ENCODE measurements at regions of chr9 and their contacts with region 1.

Region 1: DNA sequence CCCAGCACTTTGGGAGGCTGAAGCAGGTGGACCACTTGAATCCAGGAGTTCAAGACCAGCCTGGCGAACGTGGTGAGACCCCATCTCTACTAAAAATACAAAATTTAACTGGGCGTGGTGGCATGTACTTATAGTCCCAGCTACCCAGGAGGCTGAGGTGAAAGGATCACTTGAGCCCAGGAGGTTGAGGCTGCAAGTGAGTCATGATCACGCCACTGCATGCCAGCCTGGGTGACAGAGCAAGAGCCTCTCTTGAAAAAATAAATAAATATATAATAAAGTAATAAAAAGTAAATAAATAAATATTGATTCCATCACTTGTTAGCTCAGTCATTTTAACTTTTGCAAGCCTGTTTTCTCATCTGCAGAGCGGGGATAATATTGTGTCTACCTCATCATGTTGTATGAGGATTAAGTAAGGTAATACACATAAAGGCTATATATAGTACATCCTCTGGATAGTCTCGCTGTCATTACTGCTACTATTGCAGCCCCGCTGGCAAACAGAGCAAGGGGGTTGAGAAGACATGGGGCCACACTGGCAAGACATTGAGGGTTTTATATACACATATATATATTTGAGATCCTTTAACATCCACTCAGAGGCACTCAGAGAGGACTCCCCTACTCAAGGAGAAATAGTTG is 210.9 kb downstream of the C9orf152 start:
- DNase-seq: no peak
- H3K4me3 ChIP-seq: no peak overlapping the region
- H3K4me3 Mint-ChIP-seq: no peak overlapping the region
- H3K27ac ChIP-seq: no peak overlapping the region
- H3K27ac Mint-ChIP-seq: no peak overlapping the region
- H3K4me1 ChIP-seq: no peaks in the 10 kb centered on the region
- H3K4me1 Mint-ChIP-seq: peaks cover 0 to 2% (median 0%) of the 10 kb centered on the region in 4 donors
- H3K27me3 ChIP-seq: no peaks in the 10 kb centered on the region
- H3K27me3 Mint-ChIP-seq: no peaks in the 10 kb centered on the region

Region 2: DNA sequence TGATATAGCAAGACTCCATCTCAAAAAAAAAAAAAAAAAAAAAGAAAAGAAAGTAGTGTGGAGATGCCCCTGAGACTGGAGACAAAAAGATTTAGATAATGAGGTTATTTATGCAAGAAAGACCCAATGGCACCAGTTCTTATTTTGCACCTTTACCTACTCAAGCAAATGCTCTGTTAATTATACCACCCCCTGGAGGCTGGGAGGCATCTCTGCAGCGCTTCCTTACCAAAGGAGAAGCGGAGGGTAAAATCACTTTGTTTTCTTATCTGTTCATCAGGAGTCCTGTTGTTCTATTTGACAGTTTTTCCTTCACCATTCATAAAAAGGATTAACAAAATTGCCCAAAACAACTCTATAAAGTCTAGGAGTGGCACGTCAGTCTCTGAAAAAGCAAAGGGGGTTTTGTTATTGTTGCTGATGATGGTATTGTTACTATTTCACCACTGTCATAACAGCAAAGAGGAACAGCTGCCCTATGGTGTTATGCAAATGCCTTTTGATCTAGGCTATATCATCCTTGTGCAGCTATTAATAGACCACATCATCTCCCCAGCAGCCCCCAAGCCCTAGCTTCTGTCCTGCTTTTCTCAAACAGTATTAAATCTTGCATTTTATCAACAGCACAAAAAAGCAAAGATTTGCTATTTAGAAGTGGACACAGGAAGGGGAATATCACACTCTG is 43.1 kb before region 1 on chr9:
- CTCF ChIA-PET with region 1: no interaction called
- POLR2A ChIA-PET with region 1: no interaction called
- intact Hi-C with region 1: loop called (anchors 5 kb)
- DNase-seq: no peak
- H3K4me3 ChIP-seq: no peak overlapping the region
- H3K4me3 Mint-ChIP-seq: no peak overlapping the region
- H3K27ac ChIP-seq: no peak overlapping the region
- H3K27ac Mint-ChIP-seq: no peak overlapping the region
- H3K4me1 ChIP-seq: peaks cover 13% of the 10 kb centered on the region
- H3K4me1 Mint-ChIP-seq: peaks cover 6 to 19% (median 12%) of the 10 kb centered on the region in 4 donors
- H3K27me3 ChIP-seq: no peaks in the 10 kb centered on the region
- H3K27me3 Mint-ChIP-seq: no peaks in the 10 kb centered on the region